ENCODE measurements at regions of chr22 and their contacts with region 1.

Region 1: GRCh38 chr22:39090426-39091064 is 6.5 kb upstream of the APOBEC3H start:
- DNase-seq: peak; percentile 90 to 94
- ATAC-seq: peak; percentile 67 to 87 (median 77)
- H3K4me3 ChIP-seq: peak overlapping the region; percentile 22
- H3K4me3 Mint-ChIP-seq: peak overlapping the region; percentile 90
- H3K27ac ChIP-seq: peak overlapping the region; percentile 98
- H3K27ac Mint-ChIP-seq: peak overlapping the region; percentile 98 to 99
- H3K4me1 ChIP-seq: peaks cover 97% of the 10 kb centered on the region
- H3K4me1 Mint-ChIP-seq: peaks cover 82 to 90% of the 10 kb centered on the region in 2 donors
- H3K27me3 ChIP-seq: no peaks in the 10 kb centered on the region
- H3K27me3 Mint-ChIP-seq: no peaks in the 10 kb centered on the region
- CTCF ChIP-seq: no peak

Region 2: GRCh38 chr22:38811241-38811640 is 279.3 kb before region 1 on chr22:
- intact Hi-C with region 1: no loop called
- DNase-seq: no peak
- ATAC-seq: peak in 1 of 3 donors; percentile 49
- H3K4me3 ChIP-seq: no peak overlapping the region
- H3K4me3 Mint-ChIP-seq: no peak overlapping the region
- H3K27ac ChIP-seq: no peak overlapping the region
- H3K27ac Mint-ChIP-seq: no peak overlapping the region
- H3K4me1 ChIP-seq: no peaks in the 10 kb centered on the region
- H3K4me1 Mint-ChIP-seq: no peaks in the 10 kb centered on the region
- H3K27me3 ChIP-seq: no peaks in the 10 kb centered on the region
- H3K27me3 Mint-ChIP-seq: peaks cover 0 to 17% of the 10 kb centered on the region in 2 donors
- CTCF ChIP-seq: no peak

Region 3: GRCh38 chr22:39080052-39080762 is 10.3 kb before region 1 on chr22:
- intact Hi-C with region 1: loop called (anchors 1 kb)
- DNase-seq: peak; percentile 65 to 74
- ATAC-seq: peak; percentile 43 to 56 (median 51)
- H3K4me3 ChIP-seq: no peak overlapping the region
- H3K4me3 Mint-ChIP-seq: peak overlapping the region; percentile 99
- H3K27ac ChIP-seq: peak overlapping the region; percentile 76
- H3K27ac Mint-ChIP-seq: peak overlapping the region; percentile 98 to 99
- H3K4me1 ChIP-seq: peaks cover 85% of the 10 kb centered on the region
- H3K4me1 Mint-ChIP-seq: peaks cover 75 to 86% of the 10 kb centered on the region in 2 donors
- H3K27me3 ChIP-seq: no peaks in the 10 kb centered on the region
- H3K27me3 Mint-ChIP-seq: no peaks in the 10 kb centered on the region
- CTCF ChIP-seq: no peak

Measured in natural killer cell (primary cell).